ENCODE measurements at regions of chr7 and their contacts with region 1.

Region 1: DNA sequence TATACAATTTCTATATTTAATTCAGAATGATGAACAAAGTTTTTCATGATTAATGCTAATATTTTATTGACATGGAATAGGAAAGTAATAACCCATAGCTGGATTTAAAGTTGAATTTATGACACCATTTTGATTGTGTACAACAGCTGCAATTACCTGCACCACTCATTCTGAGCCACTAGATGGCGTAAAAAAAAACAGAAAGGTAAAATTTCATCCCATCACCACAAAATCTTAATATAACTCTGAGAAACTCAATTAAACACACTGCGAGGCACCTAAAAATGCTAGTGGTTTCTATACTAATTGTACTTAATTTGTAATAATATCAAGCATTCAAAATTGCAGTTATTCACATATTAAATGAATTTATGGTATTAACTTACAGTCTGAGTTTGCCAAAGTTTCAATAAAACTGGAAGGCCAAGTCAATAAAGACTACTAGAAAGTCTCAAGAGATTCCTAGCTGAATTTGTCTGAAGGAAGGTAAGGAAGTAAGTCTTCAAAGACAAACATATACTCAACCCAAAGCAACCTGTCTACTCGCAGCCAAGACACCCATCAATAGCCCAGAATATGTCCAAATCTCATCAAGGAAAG is 182.5 kb downstream of the SKAP2 start:
- DNase-seq: no peak
- ATAC-seq: no peak

Region 2: GRCh38 chr7:27160546-27161213 is 478.8 kb after region 1 on chr7:
- intact Hi-C with region 1: loop called (anchors 5 kb)
- DNase-seq: peak; percentile 92
- ATAC-seq: peak; percentile 91